ENCODE measurements at regions of chr9 and their contacts with region 1.

Region 1: DNA sequence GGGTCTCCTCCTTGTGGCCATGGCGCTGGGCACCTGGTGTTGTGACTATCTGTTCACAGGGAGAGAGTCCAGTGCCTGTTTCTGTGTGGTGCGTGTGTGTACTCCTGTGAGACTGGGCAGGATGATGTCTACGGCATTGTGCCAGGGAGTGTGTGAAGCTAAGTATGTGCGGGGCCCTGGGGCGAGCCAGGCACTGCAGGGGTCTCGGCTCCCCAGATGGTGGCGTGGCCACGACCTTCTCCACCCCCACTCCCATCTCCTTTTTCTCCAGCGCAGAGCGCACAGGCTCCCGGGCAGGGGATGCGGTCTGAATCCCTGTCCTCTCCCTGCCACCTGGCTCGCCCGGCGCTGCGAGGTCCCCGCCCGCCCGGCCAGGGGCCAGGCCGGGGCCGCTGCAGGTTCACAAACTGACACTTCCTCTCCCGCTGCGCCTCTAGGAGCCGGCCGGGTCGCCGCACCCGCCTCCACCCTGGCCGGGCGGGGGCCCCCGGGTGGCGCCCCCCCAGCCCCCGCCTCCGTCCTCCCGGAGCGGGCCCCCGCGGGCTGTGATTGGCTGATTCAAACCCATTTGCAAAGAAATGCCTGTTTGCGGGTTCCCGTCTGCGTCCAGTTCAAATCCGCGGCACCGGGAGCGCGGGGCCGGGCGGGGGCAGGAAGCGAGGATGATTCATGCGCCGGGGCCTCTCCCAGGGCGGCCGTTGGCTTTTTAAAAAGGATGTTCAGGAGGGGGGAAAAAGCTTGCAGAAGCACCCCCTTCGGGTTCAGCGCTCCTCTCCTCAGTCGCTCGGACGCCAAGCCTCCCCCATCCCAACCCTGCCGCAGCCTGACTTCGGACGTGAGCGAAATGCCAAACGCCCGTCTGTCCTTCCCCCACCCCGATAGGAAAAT is 790 bp downstream of the PHF19 start:
- DNase-seq: peak; percentile 96
- ATAC-seq: peak; percentile 61
- H3K4me3 Mint-ChIP-seq: peak overlapping the region; percentile 90
- H3K27ac Mint-ChIP-seq: peak overlapping the region; percentile 93
- H3K4me1 Mint-ChIP-seq: peaks cover 71% of the 10 kb centered on the region
- H3K27me3 Mint-ChIP-seq: no peaks in the 10 kb centered on the region

Region 2: DNA sequence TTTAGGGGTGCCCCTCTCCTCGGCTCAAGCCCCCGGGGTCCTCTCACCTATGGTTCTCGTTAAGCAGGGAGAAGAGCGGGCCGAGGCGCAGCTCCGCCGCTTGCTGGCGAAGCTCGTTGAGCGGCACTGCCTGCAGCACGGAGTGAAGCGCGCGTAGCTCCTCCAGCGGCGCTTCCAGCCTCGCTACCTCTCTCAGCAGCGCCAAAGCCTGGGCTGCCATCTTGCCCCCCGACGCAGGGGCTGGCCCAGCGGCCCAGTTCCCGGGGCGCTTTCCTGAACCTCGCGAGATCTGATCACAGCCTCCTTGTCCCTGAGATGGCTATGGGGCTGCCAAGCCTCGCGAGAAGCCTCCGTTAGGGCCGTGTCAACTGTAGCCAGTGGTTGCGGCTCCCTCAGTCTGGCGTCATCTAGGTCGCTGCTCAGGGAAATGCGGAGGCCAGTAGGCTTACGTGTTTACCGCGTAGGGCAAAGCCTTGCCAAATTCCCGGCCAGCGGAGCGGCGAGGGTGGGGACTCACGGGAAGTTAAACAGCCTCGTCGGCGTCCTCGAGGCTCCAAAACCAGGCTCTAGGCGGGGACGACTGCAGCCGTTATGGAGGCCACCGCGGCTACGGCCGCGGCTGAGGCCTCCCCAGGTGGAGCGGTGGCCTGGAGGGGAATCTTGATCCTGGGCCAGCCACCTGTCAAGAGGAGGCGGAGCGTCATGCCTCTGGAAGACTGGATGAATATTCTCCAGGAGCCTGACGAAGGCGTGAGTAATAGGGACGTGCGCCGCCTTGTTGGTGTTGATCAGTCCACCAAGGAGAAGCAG is 33.3 kb before region 1 on chr9 and contains the start of gene PSMD5:
- CTCF ChIA-PET with region 1: no interaction called
- DNase-seq: peak; percentile 100
- ATAC-seq: peak; percentile 97
- H3K4me3 Mint-ChIP-seq: peak within 1 kb of the TSS; percentile 95
- H3K27ac Mint-ChIP-seq: peak within 1 kb of the TSS; percentile 95
- H3K4me1 Mint-ChIP-seq: peaks cover 79% of the 10 kb centered on the region
- H3K27me3 Mint-ChIP-seq: no peaks in the 10 kb centered on the region
- total RNA-seq, gene PSMD5: 53.6 to 58.9 TPM

Region 3: DNA sequence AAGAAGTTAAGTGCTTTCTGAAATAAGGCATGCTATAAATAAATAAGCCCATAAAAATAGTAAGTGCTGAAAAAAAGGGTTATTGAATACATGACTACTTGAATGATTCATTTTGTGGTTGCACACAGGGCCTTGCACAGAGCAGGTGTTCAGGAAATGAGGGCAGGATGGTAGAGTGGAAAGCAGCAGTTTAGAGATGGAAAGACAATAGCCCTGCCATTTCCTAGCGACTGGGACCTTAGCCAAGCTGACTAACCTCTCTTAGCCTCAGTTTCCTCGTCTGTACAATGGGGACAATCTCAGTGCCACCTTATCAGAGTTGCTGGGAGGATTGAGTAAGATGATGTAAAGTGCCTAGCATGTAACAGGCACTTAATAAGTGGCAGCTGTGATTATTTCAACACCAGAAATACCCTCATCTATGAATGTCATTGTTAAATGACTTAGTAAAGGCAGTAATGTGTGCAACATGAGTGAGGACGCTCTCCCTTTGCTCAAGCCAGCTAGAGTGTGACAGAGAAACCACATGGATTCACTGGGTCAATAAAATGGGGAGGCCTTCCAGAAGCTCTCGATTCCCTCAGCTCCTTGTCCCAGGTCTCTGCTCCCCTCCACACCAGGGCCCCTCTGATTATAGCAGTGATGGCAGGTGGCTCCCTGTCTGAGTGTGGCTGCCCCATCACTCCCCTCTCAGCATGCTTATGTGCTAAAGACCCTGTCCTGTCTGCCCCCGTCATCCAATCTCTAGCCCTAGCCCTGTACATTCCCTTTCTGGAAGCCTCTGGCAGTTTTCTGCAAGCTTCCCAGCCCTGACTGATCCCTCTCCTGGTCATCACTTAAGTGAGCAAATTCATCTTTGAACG is 16.8 kb after region 1 on chr9:
- CTCF ChIA-PET with region 1: interaction called, 44 read pairs
- DNase-seq: peak; percentile 87
- ATAC-seq: peak; percentile 68
- H3K4me3 Mint-ChIP-seq: peak overlapping the region; percentile 56
- H3K27ac Mint-ChIP-seq: peak overlapping the region; percentile 96
- H3K4me1 Mint-ChIP-seq: peaks cover 80% of the 10 kb centered on the region
- H3K27me3 Mint-ChIP-seq: no peaks in the 10 kb centered on the region

Region 4: GRCh38 chr9:120904061-120904977 is 28.1 kb after region 1 on chr9:
- CTCF ChIA-PET with region 1: interaction called, 10 read pairs
- DNase-seq: peak; percentile 66
- ATAC-seq: peak; percentile 24
- H3K4me3 Mint-ChIP-seq: no peak overlapping the region
- H3K27ac Mint-ChIP-seq: peak overlapping the region; percentile 85
- H3K4me1 Mint-ChIP-seq: peaks cover 85% of the 10 kb centered on the region
- H3K27me3 Mint-ChIP-seq: no peaks in the 10 kb centered on the region

Region 5: DNA sequence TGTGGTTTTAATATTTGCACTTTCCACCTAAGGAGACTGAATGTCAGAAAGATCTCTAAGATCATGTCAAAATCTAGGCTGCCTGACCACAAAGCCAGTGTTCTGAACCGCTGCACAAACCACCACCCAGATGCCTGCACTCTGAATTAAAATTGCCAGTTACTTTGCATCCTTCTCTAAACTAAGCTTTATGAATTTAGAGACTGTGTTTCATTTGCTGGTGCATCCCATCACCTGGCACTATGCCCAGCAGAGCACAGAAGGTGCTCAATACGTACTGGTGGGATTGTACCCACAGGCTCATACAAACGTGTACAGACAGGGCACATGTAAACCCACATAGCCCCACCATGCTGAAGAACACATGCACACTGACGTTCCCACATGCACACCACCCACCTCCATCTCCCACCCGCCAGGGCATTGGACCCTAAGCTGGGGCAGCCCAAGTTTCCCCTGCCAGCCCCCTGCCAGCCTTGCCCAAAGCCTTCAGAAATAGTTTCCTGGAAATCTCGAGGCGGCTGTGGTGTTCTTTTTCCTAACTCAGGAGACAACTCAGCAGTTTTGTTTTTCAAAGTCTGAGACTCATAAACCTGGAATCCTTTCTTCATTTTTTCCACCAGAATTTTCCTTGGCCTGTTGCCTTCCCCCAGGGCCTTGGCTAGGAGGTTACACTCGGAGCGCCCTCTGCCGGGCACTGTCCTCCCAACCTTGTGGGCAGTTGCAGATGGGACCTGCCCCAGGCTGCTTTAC is 60.0 kb after region 1 on chr9:
- CTCF ChIA-PET with region 1: interaction called, 22 read pairs
- DNase-seq: peak; percentile 93
- ATAC-seq: peak; percentile 75
- H3K4me3 Mint-ChIP-seq: peak overlapping the region; percentile 31
- H3K27ac Mint-ChIP-seq: peak overlapping the region; percentile 87
- H3K4me1 Mint-ChIP-seq: peaks cover 57% of the 10 kb centered on the region
- H3K27me3 Mint-ChIP-seq: peaks cover 2% of the 10 kb centered on the region

Region 6: DNA sequence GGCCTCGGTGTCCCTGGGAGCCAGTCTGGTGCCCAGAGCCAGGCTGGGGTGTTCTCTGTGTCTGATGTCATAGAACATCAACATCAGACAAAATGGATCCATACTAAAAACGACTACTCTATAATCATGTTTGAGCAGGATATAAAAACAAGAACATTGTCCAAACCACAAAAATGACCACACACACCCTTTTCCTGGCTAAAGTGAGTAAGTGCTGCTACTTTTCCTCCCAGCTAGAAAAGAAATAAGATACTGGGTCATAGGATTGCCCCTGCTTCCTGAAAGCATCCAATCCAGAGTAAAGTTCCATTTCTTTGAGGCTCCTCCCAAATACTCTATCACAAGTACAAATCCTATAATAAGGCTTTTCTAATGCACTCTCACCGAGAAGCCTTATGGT is 70.1 kb after region 1 on chr9:
- CTCF ChIA-PET with region 1: no interaction called
- DNase-seq: no peak
- ATAC-seq: no peak
- H3K4me3 Mint-ChIP-seq: no peak overlapping the region
- H3K27ac Mint-ChIP-seq: no peak overlapping the region
- H3K4me1 Mint-ChIP-seq: peaks cover 5% of the 10 kb centered on the region
- H3K27me3 Mint-ChIP-seq: no peaks in the 10 kb centered on the region

Measured in activated CD8-positive, alpha-beta memory T cell treated with anti-CD3 and anti-CD28 coated beads, Interleukin-2, amount 10 ng/mL, durations not matched to agents 7 days and 5 days (primary cell).